ENCODE measurements at regions of chr14 and their contacts with region 1.

Region 1: DNA sequence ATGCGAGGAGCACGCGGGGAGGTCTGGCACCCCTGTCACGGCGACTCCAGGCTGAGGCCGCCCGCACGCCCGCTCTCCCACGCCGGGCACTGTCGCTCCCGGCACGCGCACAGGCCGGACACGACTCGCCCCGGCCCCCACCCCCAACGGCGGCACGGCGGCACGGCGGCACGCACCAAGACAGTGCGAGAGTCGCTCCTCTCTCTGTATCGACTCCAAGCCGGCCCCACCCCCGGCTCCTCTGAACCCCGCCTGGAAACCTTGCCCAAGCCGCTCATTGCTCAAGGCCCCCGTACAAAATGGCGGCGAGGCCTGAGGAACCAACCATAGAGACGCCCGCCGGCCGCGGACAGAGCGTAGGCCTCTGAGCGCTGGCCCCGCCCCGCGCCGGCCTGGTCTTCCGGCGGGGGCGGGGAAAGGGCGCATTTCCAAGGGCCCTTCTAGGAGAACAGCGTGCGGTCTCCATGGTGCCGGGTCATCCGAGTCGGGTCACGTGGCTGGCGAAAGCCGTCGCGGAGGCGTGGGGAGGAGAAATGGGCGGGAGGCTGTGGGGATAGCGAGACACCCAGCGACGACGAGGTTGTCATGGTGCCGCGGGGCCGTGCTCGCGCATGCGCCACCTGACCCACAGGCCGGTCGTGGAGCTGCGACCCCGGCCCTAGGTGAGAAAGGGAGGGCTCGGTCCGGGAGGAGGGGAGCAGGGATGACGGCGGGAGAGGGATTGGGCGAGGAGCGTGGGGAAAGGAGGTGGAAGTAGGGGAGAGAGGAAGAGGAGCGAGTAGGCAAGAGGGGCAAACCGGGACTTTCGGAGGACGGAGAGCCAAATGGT is at the start of gene CIPC:
- DNase-seq: peak; percentile 100
- H3K4me3 ChIP-seq: peak within 1 kb of the TSS; percentile 78 to 99
- H3K27ac ChIP-seq: peak within 1 kb of the TSS; percentile 98 to 100
- H3K4me1 ChIP-seq: no peaks in the 10 kb centered on the region
- H3K27me3 ChIP-seq: no peaks in the 10 kb centered on the region
- CTCF ChIP-seq: peak in 2 of 4 experiments; percentile 46 to 57
- POLR2A ChIP-seq: peak; percentile 94
- total RNA-seq, gene CIPC: 45.1 to 63.3 TPM

Region 2: DNA sequence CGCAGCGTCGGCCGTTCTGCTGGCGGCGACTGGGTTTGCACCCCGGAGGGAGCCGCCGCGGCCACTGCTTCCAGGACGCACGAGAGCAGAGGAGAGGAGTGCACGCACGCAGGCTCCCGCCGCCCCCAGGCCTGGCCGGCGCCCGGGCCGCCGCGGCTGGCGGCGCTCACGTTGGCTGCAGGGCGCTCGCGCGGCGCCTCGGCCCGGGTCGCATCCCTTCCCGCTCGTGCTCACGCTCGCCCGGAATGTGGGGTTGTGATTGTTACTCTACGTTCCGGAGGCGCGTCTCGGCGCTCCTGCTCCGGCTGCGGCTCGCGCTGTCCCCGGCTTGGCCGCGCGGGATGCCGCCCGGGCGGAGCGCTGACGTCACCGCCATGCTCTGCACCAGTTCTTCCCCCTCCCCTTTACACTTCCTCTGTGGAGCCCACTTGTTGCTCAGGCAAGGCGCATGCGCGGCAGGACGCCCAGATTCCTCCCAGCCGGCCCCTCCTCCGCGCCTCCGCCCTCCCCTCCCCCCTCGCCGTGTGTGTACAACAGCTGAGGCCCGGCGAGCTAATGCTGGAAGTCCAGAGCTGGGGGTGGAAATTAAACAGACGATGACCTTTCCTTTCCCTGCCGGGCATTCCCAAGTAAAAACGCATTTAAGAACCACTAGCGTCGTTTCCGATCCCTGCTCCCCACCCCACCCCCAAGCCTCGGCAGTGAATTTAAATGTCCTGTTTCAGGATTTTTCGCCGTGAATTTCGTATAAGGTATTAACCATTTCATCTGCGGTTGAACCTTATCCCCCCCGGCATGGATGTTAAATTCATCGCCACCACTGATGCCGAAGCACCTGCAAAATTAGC is 69.3 kb before region 1 on chr14 and contains the start of gene IRF2BPL:
- intact Hi-C with region 1: loop called (anchors 5 kb)
- DNase-seq: peak; percentile 97
- H3K4me3 ChIP-seq: peak within 1 kb of the TSS; percentile 86 to 93
- H3K27ac ChIP-seq: peak within 1 kb of the TSS; percentile 99 to 100
- H3K4me1 ChIP-seq: peaks cover 42% of the 10 kb centered on the region
- H3K27me3 ChIP-seq: no peaks in the 10 kb centered on the region
- CTCF ChIP-seq: peak in 2 of 4 experiments; percentile 4 to 19
- POLR2A ChIP-seq: peak; percentile 97
- total RNA-seq, gene IRF2BPL: 113 to 141 TPM

Region 3: GRCh38 chr14:77320238-77320935 is 222.5 kb after region 1 on chr14 and contains the start of gene POMT2:
- intact Hi-C with region 1: loop called (anchors 5 kb)
- DNase-seq: peak; percentile 93
- H3K4me3 ChIP-seq: peak within 1 kb of the TSS; percentile 87 to 93
- H3K27ac ChIP-seq: peak within 1 kb of the TSS; percentile 98 to 99
- H3K4me1 ChIP-seq: peaks cover 7% of the 10 kb centered on the region
- H3K27me3 ChIP-seq: no peaks in the 10 kb centered on the region
- CTCF ChIP-seq: peak; percentile 50 to 84 (median 64)
- POLR2A ChIP-seq: no peak
- total RNA-seq, gene POMT2: 8.4 to 101 TPM

Region 4: DNA sequence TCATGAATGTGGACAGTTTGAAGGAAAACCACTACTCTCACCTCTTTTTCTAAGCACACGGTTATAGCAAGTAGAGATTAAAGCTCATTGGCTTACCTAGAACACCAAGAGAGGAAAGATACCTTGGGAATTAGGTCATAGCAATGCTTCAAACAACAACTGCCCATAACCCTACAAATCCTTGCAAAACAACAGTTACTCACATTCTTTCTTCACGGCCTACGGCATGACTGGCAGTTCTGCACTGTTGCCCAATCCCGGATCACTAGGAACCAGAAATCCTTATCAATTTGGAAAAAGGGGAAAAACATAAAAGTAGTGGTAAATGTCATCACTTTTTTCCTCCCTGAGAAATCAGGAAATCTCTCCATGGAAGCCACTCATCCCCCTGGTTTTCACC is 410.3 kb after region 1 on chr14:
- intact Hi-C with region 1: no loop called
- DNase-seq: no peak
- H3K4me3 ChIP-seq: no peak overlapping the region
- H3K27ac ChIP-seq: no peak overlapping the region
- H3K4me1 ChIP-seq: no peaks in the 10 kb centered on the region
- H3K27me3 ChIP-seq: no peaks in the 10 kb centered on the region
- CTCF ChIP-seq: no peak
- POLR2A ChIP-seq: no peak

Measured in prostate gland (tissue), 2 donors.